ENCODE measurements at regions of chr15 and their contacts with region 1.

Region 1: GRCh38 chr15:58749532-58750337 is at the start of gene ADAM10:
- DNase-seq: peak; percentile 98 to 100
- H3K4me3 ChIP-seq: peak within 1 kb of the TSS; percentile 87 to 97
- H3K27ac ChIP-seq: peak within 1 kb of the TSS; percentile 98 to 99
- H3K4me1 ChIP-seq: peaks cover 0 to 34% (median 8%) of the 10 kb centered on the region in 4 donors
- H3K27me3 ChIP-seq: no peaks in the 10 kb centered on the region
- CTCF ChIP-seq: no peak

Region 2: GRCh38 chr15:58770857-58771620 is 21.3 kb after region 1 on chr15 and contains the start of gene MINDY2:
- intact Hi-C with region 1: loop called (anchors 1 kb)
- DNase-seq: peak; percentile 98 to 99
- H3K4me3 ChIP-seq: peak within 1 kb of the TSS; percentile 69 to 81
- H3K27ac ChIP-seq: peak within 1 kb of the TSS; percentile 89 to 96
- H3K4me1 ChIP-seq: peaks cover 0 to 45% (median 13%) of the 10 kb centered on the region in 4 donors
- H3K27me3 ChIP-seq: no peaks in the 10 kb centered on the region
- CTCF ChIP-seq: peak in 1 of 2 experiments; percentile 16

Region 3: GRCh38 chr15:58933281-58934113 is 183.8 kb after region 1 on chr15 and contains the start of gene SLTM:
- intact Hi-C with region 1: loop called (anchors 10 kb)
- DNase-seq: peak; percentile 92 to 97
- H3K4me3 ChIP-seq: peak within 1 kb of the TSS; percentile 76 to 83
- H3K27ac ChIP-seq: peak within 1 kb of the TSS; percentile 95 to 99
- H3K4me1 ChIP-seq: peaks cover 0 to 39% (median 16%) of the 10 kb centered on the region in 4 donors
- H3K27me3 ChIP-seq: no peaks in the 10 kb centered on the region
- CTCF ChIP-seq: peak; percentile 29 to 34

Measured in tibial artery (tissue), 4 donors.